ENCODE measurements at regions of chr19 and their contacts with region 1.

Region 1: GRCh38 chr19:46308510-46308909 is 11.7 kb downstream of the HIF3A start:
- DNase-seq: no peak
- ATAC-seq: peak in 1 of 4 donors; percentile 2
- H3K4me3 ChIP-seq: no peak overlapping the region
- H3K27ac ChIP-seq: no peak overlapping the region
- H3K4me1 ChIP-seq: peaks cover 0 to 22% (median 5%) of the 10 kb centered on the region in 12 donors
- H3K27me3 ChIP-seq: no peaks in the 10 kb centered on the region
- CTCF ChIP-seq: no peak
- POLR2A ChIP-seq: no peak

Region 2: DNA sequence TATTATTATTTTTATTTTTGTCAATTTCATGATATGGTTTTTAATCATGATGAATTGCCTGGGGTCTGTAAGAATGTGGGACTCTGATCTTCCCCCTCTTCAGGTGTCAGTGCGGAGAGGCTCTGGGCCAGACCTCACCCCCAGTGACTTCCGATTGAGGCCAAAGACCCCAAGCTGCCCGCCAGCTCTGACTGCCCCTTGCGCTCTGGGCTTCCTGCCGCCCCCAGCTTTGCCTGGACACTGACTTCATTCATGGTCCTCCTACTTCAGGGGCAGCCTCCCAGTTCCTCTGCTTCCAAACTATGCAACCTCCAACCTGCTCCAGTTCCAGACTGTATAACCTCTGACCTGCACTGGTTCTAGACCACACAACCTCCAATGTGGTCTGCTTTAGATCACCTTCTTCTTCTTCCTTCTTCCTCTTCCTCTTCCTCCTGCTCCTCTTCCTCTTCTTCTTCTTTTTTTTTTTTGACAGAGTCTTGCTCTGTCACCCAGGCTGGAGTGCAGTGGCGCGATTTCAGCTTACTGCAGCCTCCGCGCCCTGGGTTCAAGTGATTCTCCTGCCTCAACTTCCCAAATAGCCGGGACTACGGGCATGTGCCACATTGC is 31.6 kb after region 1 on chr19:
- intact Hi-C with region 1: loop called in 5 of 10 experiments (anchors 5 kb)
- DNase-seq: no peak
- ATAC-seq: no peak
- H3K4me3 ChIP-seq: no peak overlapping the region
- H3K27ac ChIP-seq: no peak overlapping the region
- H3K4me1 ChIP-seq: no peaks in the 10 kb centered on the region
- H3K27me3 ChIP-seq: no peaks in the 10 kb centered on the region
- CTCF ChIP-seq: no peak
- POLR2A ChIP-seq: no peak

Region 3: GRCh38 chr19:46346821-46347571 is 38.5 kb after region 1 on chr19 and contains the start of gene PPP5C:
- intact Hi-C with region 1: loop called in 5 of 10 experiments (anchors 5 kb)
- DNase-seq: peak; percentile 92 to 97 (median 96)
- ATAC-seq: peak; percentile 48 to 83 (median 81)
- H3K4me3 ChIP-seq: peak within 1 kb of the TSS; percentile 70 to 100 (median 96)
- H3K27ac ChIP-seq: peak within 1 kb of the TSS; percentile 52 to 96 (median 90)
- H3K4me1 ChIP-seq: peaks cover 7 to 56% (median 46%) of the 10 kb centered on the region in 12 donors
- H3K27me3 ChIP-seq: no peaks in the 10 kb centered on the region
- CTCF ChIP-seq: peak; percentile 29 to 78 (median 58)
- POLR2A ChIP-seq: peak in 1 of 2 donors; percentile 86
- total RNA-seq, gene PPP5C: 69.9 to 115 (median 77.1) TPM

Region 4: DNA sequence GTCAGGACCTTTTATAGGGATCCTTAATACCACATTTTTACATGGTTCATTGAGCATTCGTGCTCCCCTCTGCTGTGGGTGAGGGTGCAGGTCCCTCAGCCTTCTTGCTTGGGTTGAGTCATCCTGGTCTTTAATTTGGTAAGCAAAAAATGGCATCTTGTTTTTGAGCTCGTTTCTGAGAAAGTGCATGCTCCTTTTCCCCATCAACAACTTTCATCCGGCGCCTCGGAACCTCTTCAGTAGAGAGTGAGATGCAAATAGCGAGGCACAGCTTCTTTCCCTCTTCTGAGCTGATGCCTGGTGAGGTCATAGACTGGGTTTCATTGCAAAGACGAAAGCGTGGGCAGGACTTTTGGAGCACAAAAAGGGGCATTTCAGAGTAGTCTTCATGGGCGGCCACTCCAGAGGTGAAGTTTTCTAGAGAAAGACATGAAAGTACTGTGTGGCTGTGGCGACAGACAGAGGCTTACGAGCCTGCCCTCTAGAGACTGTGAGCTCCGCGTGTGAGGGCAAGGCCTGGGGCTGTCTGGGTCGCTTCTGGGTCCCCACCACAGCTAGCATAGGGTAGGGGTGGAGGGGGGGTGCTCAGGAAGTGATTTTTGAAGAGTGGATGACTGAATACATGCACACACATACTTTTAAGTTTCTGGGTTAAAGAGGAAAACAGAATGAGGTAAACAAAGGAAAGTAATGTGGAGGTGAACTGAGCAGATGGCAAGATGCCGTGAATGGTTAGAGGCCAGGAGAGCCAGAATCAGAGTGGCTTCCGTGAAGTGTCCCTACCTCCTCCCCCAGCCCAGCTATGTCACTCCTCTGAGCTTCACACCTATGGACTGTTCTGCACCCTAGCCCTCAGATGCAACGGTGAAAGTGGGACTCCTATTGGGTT is 878.2 kb after region 1 on chr19:
- intact Hi-C with region 1: no loop called
- DNase-seq: no peak
- ATAC-seq: no peak
- H3K4me3 ChIP-seq: no peak overlapping the region
- H3K27ac ChIP-seq: peak overlapping the region in 2 of 12 donors; percentile 49 to 71
- H3K4me1 ChIP-seq: peaks cover 0 to 46% (median 25%) of the 10 kb centered on the region in 12 donors
- H3K27me3 ChIP-seq: no peaks in the 10 kb centered on the region
- CTCF ChIP-seq: no peak
- POLR2A ChIP-seq: no peak